A549 (cell line): ENCODE measurements at regions of chr16 and their contacts with region 1.

Region 1: DNA sequence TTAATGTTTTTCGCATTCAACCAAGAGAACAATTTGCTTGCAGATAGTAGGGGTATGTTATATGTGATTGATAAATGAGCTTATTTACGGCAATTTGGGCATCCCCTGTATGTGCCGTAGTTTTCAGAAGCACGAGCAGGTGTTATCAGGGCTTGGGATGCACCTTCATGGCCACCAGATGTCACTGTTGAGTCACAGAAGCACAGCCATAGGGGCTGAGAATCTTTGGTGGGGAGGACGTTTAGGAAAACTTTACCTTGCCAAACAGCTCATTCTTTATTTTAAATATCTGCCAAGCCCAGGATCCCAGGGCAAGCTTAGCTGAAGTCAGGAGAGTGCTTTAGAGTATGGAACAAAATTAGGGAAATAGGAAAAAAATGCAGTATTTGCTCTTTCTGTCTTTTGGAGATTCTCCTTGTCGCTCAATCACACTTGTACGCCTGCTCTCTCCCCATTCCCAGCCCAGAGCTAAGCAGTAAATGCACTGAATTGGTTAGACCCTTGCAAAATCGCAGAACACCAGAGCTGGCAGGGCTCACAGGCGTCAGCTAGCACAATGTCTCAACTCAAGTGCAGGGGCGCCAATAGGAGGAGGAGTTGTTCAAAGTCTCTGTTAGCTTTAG is 93.6 kb upstream of the MPHOSPH6 start:
- DNase-seq: peak; percentile 48 to 51
- ATAC-seq: peak; percentile 86 to 97; a peak in 5 of 6 replicates
- H3K4me3 ChIP-seq: no peak overlapping the region
- H3K27ac ChIP-seq: no peak overlapping the region
- H3K4me1 ChIP-seq: no peaks in the 10 kb centered on the region
- CTCF ChIP-seq: peak; percentile 90
- EP300 ChIP-seq: no peak
- POLR2A ChIP-seq: no peak
- RAD21 ChIP-seq: peak; percentile 86 to 88

Region 2: GRCh38 chr16:82240111-82240510 is 23.5 kb before region 1 on chr16:
- CTCF ChIA-PET with region 1: interaction called, 15 read pairs
- POLR2A ChIA-PET with region 1: no interaction called
- DNase-seq: no peak
- ATAC-seq: no peak
- H3K4me3 ChIP-seq: no peak overlapping the region
- H3K27ac ChIP-seq: no peak overlapping the region
- H3K4me1 ChIP-seq: no peaks in the 10 kb centered on the region
- CTCF ChIP-seq: no peak
- EP300 ChIP-seq: no peak
- POLR2A ChIP-seq: no peak
- RAD21 ChIP-seq: no peak

Region 3: GRCh38 chr16:82280867-82281266 is 17.2 kb after region 1 on chr16:
- CTCF ChIA-PET with region 1: interaction called, 29 read pairs
- POLR2A ChIA-PET with region 1: no interaction called
- DNase-seq: no peak
- ATAC-seq: no peak
- H3K4me3 ChIP-seq: no peak overlapping the region
- H3K27ac ChIP-seq: no peak overlapping the region
- H3K4me1 ChIP-seq: no peaks in the 10 kb centered on the region
- CTCF ChIP-seq: no peak
- EP300 ChIP-seq: no peak
- POLR2A ChIP-seq: no peak
- RAD21 ChIP-seq: no peak

Region 4: GRCh38 chr16:82456683-82457082 is 193.1 kb after region 1 on chr16:
- CTCF ChIA-PET with region 1: interaction called, 17 read pairs
- POLR2A ChIA-PET with region 1: no interaction called
- DNase-seq: peak; percentile 52 to 64
- ATAC-seq: peak; percentile 86 to 98
- H3K4me3 ChIP-seq: no peak overlapping the region
- H3K27ac ChIP-seq: no peak overlapping the region
- H3K4me1 ChIP-seq: no peaks in the 10 kb centered on the region
- CTCF ChIP-seq: peak; percentile 59
- EP300 ChIP-seq: no peak
- POLR2A ChIP-seq: no peak
- RAD21 ChIP-seq: peak; percentile 36 to 46; a peak in 3 of 5 replicates

Region 5: GRCh38 chr16:82639666-82640336 is 376.2 kb after region 1 on chr16:
- CTCF ChIA-PET with region 1: interaction called, 12 read pairs
- POLR2A ChIA-PET with region 1: no interaction called
- DNase-seq: peak; percentile 22 to 55
- ATAC-seq: peak; percentile 71 to 93; a peak in 5 of 6 replicates
- H3K4me3 ChIP-seq: no peak overlapping the region
- H3K27ac ChIP-seq: no peak overlapping the region
- H3K4me1 ChIP-seq: no peaks in the 10 kb centered on the region
- CTCF ChIP-seq: peak; percentile 61
- EP300 ChIP-seq: no peak
- POLR2A ChIP-seq: no peak
- RAD21 ChIP-seq: peak; percentile 37 to 49; a peak in 3 of 5 replicates

Region 6: DNA sequence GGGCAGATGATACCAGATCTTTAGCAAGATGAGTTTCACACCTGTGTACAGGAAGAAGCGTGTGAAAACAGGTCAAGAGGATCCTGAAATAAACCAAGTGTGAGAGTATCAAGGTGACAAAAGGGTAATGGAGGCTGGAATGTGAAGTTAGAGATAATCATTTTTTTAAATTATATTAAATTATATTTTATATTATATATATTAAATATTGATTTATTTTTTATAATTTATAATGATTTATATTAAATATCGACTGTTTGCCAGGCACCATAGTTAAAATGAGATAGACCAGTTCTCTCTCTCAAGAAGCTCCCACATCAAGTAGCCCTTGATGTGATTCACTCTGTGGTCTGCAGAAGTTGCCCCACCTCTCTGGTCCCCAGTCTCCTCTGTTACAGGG is 1183.9 kb after region 1 on chr16:
- CTCF ChIA-PET with region 1: interaction called, 11 read pairs
- POLR2A ChIA-PET with region 1: no interaction called
- DNase-seq: no peak
- ATAC-seq: no peak
- H3K4me3 ChIP-seq: no peak overlapping the region
- H3K27ac ChIP-seq: no peak overlapping the region
- H3K4me1 ChIP-seq: no peaks in the 10 kb centered on the region
- CTCF ChIP-seq: no peak
- EP300 ChIP-seq: no peak
- POLR2A ChIP-seq: no peak
- RAD21 ChIP-seq: no peak